H1 (cell line): ENCODE measurements at regions of chr7 and their contacts with region 1.

Region 1: GRCh38 chr7:87152107-87152844 is at the start of gene DMTF1:
- DNase-seq: peak; percentile 78 to 89
- H3K4me3 ChIP-seq: peak within 1 kb of the TSS; percentile 72 to 99 (median 82)
- H3K27ac ChIP-seq: peak within 1 kb of the TSS; percentile 99
- H3K4me1 ChIP-seq: peaks cover 0 to 3% (median 0%) of the 10 kb centered on the region in 4 experiments; a peak in 2 of 7 replicates
- H3K27me3 ChIP-seq: no peaks in the 10 kb centered on the region
- CTCF ChIP-seq: no peak
- EP300 ChIP-seq: peak in 1 of 2 experiments; percentile 67; a peak in 1 of 3 replicates
- POLR2A ChIP-seq: peak; percentile 87 to 94
- RAD21 ChIP-seq: no peak
- total RNA-seq, gene DMTF1: 76.9 and 86.0 TPM in 2 replicates

Region 2: GRCh38 chr7:86914551-86914950 is 237.7 kb before region 1 on chr7:
- CTCF ChIA-PET with region 1: interaction called, 49 read pairs
- POLR2A ChIA-PET with region 1: interaction called, 3 read pairs
- DNase-seq: no peak
- H3K4me3 ChIP-seq: no peak overlapping the region
- H3K27ac ChIP-seq: no peak overlapping the region
- H3K4me1 ChIP-seq: no peaks in the 10 kb centered on the region
- H3K27me3 ChIP-seq: peaks cover under 1 to 3% (median 2%) of the 10 kb centered on the region in 4 experiments; a peak in 4 of 7 replicates
- CTCF ChIP-seq: peak in 1 of 3 experiments; percentile 39; a peak in 2 of 4 replicates
- EP300 ChIP-seq: no peak
- POLR2A ChIP-seq: no peak
- RAD21 ChIP-seq: peak in 1 of 2 experiments; percentile 28; a peak in 2 of 4 replicates

Region 3: GRCh38 chr7:86932038-86932512 is 220.2 kb before region 1 on chr7:
- CTCF ChIA-PET with region 1: interaction called, 86 read pairs
- POLR2A ChIA-PET with region 1: interaction called, 10 read pairs
- DNase-seq: no peak
- H3K4me3 ChIP-seq: no peak overlapping the region
- H3K27ac ChIP-seq: no peak overlapping the region
- H3K4me1 ChIP-seq: no peaks in the 10 kb centered on the region
- H3K27me3 ChIP-seq: peaks cover 0 to 1% (median 0%) of the 10 kb centered on the region in 4 experiments; a peak in 1 of 7 replicates
- CTCF ChIP-seq: no peak
- EP300 ChIP-seq: no peak
- POLR2A ChIP-seq: no peak
- RAD21 ChIP-seq: no peak

Region 4: DNA sequence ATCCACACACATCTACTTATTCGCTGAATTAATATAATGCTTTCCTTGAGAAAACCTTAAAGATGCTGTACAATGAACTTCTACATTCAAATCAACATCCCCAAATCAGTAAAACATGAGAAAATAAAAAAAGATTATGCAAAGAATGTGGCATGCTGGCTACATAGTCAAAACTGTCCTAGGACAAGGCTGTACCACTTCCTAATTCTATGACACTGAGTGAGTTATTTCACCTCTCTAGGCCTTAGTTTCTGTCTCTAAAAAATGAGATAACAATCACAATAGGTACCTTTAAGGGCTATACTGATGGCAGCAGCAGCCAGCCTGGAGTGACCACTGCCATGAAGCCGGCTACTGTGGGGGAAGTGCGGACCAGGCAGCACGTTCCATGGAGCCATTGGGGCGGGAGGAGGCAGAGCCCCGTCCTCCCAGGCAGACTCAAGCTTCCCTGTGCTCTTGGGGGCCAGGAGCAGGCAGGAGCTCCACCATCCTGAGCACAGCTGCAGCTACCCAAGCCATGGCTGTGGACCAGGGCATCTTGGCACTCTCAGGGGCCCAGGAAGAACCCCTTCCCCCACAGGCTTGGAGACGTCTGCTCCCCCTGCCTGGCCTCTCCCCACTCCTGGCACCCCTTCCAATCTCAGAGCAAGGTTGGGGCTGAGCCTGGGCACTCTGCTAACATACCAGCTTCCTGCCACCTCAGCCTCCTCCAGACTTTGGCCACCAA is 203.1 kb before region 1 on chr7:
- CTCF ChIA-PET with region 1: interaction called, 17 read pairs
- POLR2A ChIA-PET with region 1: interaction called, 5 read pairs
- DNase-seq: no peak
- H3K4me3 ChIP-seq: no peak overlapping the region
- H3K27ac ChIP-seq: no peak overlapping the region
- H3K4me1 ChIP-seq: peaks cover 0 to 21% (median 4%) of the 10 kb centered on the region in 4 experiments; a peak in 3 of 7 replicates
- H3K27me3 ChIP-seq: no peaks in the 10 kb centered on the region
- CTCF ChIP-seq: no peak
- EP300 ChIP-seq: no peak
- POLR2A ChIP-seq: no peak
- RAD21 ChIP-seq: no peak

Region 5: GRCh38 chr7:87059525-87060287 is 92.6 kb before region 1 on chr7 and contains the start of gene ELAPOR2:
- CTCF ChIA-PET with region 1: interaction called, 34 read pairs
- POLR2A ChIA-PET with region 1: interaction called, 6 read pairs
- DNase-seq: peak; percentile 54 to 90
- H3K4me3 ChIP-seq: peak within 1 kb of the TSS; percentile 59 to 78 (median 70)
- H3K27ac ChIP-seq: no peak within 1 kb of the TSS
- H3K4me1 ChIP-seq: peaks cover 0 to 3% (median 0%) of the 10 kb centered on the region in 4 experiments; a peak in 2 of 7 replicates
- H3K27me3 ChIP-seq: peaks cover 0 to 5% (median 0%) of the 10 kb centered on the region in 4 experiments; a peak in 4 of 7 replicates
- CTCF ChIP-seq: peak; percentile 65 to 82 (median 72)
- EP300 ChIP-seq: no peak
- POLR2A ChIP-seq: no peak
- RAD21 ChIP-seq: peak; percentile 66 to 70
- total RNA-seq, gene ELAPOR2: 32.9 TPM in 2 replicates

Region 6: GRCh38 chr7:87083865-87084519 is 68.3 kb before region 1 on chr7:
- CTCF ChIA-PET with region 1: no interaction called
- POLR2A ChIA-PET with region 1: no interaction called
- DNase-seq: no peak
- H3K4me3 ChIP-seq: no peak overlapping the region
- H3K27ac ChIP-seq: no peak overlapping the region
- H3K4me1 ChIP-seq: no peaks in the 10 kb centered on the region
- H3K27me3 ChIP-seq: no peaks in the 10 kb centered on the region
- CTCF ChIP-seq: no peak
- EP300 ChIP-seq: no peak
- POLR2A ChIP-seq: no peak
- RAD21 ChIP-seq: no peak

Region 7: DNA sequence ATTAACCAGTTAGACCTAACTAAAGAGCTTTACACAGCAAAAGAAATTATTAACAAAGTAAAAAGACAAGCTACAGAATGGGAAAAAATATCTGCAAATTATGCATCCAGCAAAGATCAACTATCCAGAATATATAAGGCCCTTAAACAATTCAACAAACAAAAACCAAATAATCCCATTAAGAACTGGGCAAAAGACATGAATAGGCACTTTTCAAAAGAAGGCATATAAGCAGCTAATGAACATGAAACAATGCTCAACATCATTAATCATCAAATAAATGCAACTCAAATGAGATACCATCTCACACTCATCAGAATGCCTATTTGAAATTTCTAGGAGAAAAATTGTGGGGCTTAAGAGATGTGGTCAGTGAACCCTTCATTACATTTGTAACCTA is 15.0 kb before region 1 on chr7:
- CTCF ChIA-PET with region 1: interaction called, 58 read pairs
- POLR2A ChIA-PET with region 1: interaction called, 9 read pairs
- DNase-seq: no peak
- H3K4me3 ChIP-seq: no peak overlapping the region
- H3K27ac ChIP-seq: no peak overlapping the region
- H3K4me1 ChIP-seq: no peaks in the 10 kb centered on the region
- H3K27me3 ChIP-seq: no peaks in the 10 kb centered on the region
- CTCF ChIP-seq: no peak
- EP300 ChIP-seq: no peak
- POLR2A ChIP-seq: no peak
- RAD21 ChIP-seq: no peak

Region 8: GRCh38 chr7:87316846-87317545 is 164.7 kb after region 1 on chr7:
- CTCF ChIA-PET with region 1: no interaction called
- POLR2A ChIA-PET with region 1: no interaction called
- DNase-seq: no peak
- H3K4me3 ChIP-seq: no peak overlapping the region
- H3K27ac ChIP-seq: no peak overlapping the region
- H3K4me1 ChIP-seq: no peaks in the 10 kb centered on the region
- H3K27me3 ChIP-seq: no peaks in the 10 kb centered on the region
- CTCF ChIP-seq: no peak
- EP300 ChIP-seq: no peak
- POLR2A ChIP-seq: no peak
- RAD21 ChIP-seq: no peak